Left cardiac atrium (tissue), 4 donors: ENCODE measurements at regions of chrX and their contacts with region 1.

Region 1: GRCh38 chrX:46642145-46642544 is 68.6 kb downstream of the CHST7 start:
- DNase-seq: peak; percentile 28
- ATAC-seq: peak; percentile 83 to 84

Region 2: DNA sequence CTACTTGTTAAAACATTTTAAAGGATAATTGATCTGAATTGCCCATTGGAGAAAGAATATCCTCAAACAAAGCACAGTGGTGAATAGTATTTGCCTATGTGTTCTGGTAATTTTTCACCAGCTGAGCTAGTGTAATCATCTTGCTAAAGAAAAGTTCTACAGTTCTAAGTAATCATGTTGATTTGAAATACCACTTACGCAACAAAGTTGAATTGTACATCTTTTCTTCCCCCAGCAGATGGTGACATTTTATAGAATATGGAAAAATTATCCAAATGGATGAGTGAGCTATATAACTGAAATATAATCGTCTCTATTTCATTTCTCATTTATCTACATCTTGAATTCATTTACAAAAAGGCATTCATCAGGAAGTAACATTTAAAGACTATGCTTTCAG is 87.2 kb before region 1 on chrX:
- intact Hi-C with region 1: loop called in 1 of 2 experiments (anchors 5 kb)
- DNase-seq: no peak
- ATAC-seq: peak in 1 of 2 donors; percentile 34

Region 3: DNA sequence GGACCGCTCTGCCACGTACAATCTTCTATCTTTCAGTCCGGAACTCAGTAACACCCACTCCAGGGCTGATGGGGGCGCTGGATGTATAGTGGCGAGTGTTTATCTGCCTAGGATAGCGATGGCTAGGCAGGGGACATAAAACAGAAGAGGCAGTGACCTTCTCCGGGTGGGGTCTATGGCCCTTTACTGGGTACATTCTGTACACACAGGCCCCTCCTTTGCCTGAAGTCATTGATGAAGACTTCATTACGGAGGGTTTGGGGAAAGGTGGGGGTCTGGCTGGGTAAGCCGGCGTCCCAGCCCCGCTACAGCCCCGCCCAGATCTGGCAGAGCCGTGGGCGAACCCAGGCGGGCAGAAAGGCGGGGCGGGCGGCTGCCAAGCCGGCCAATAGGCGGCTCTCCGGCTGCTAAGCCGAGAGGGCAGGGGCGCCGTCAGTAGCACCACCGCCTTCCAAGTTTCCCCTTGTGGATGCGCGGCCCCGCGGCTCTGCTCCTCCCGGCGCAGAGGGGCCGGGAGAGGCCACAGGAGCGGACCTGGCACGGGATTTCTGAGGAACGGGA is 68.7 kb before region 1 on chrX and contains the start of gene CHST7:
- intact Hi-C with region 1: loop called (anchors 5 to 10 kb)
- DNase-seq: peak; percentile 79
- ATAC-seq: peak; percentile 84 to 90
- total RNA-seq, gene CHST7: 11.8 to 29.0 TPM